ENCODE measurements at regions of chr11 and their contacts with region 1.

Region 1: GRCh38 chr11:119338318-119338907 is 2.3 kb downstream of the C1QTNF5 start:
- DNase-seq: peak; percentile 39
- ATAC-seq: peak; percentile 67
- H3K4me3 ChIP-seq: no peak overlapping the region
- H3K27ac ChIP-seq: no peak overlapping the region
- H3K4me1 ChIP-seq: peaks cover 9 to 51% of the 10 kb centered on the region in 2 experiments
- H3K27me3 ChIP-seq: no peaks in the 10 kb centered on the region
- CTCF ChIP-seq: peak; percentile 85 to 88 (median 86)
- POLR2A ChIP-seq: no peak
- RAD21 ChIP-seq: peak; percentile 74

Region 2: GRCh38 chr11:119316729-119317591 is 21.5 kb before region 1 on chr11 and contains the start of gene MCAM:
- CTCF ChIA-PET with region 1: interaction called, 44 read pairs
- POLR2A ChIA-PET with region 1: interaction called, 3 read pairs
- RAD21 ChIA-PET with region 1: interaction called, 4 read pairs
- intact Hi-C with region 1: no loop called
- DNase-seq: no peak
- ATAC-seq: peak; percentile 52
- H3K4me3 ChIP-seq: peak within 1 kb of the TSS; percentile 63 to 75
- H3K27ac ChIP-seq: peak within 1 kb of the TSS; percentile 66
- H3K4me1 ChIP-seq: peaks cover 16 to 45% of the 10 kb centered on the region in 2 experiments
- H3K27me3 ChIP-seq: no peaks in the 10 kb centered on the region
- CTCF ChIP-seq: no peak
- POLR2A ChIP-seq: no peak
- RAD21 ChIP-seq: no peak
- total RNA-seq, gene MCAM: 17.4 TPM

Region 3: GRCh38 chr11:119356349-119357031 is 18.1 kb after region 1 on chr11:
- CTCF ChIA-PET with region 1: interaction called, 68 read pairs
- POLR2A ChIA-PET with region 1: interaction called, 7 read pairs
- RAD21 ChIA-PET with region 1: interaction called in 1 of 2 experiments, 3 read pairs
- intact Hi-C with region 1: no loop called
- DNase-seq: peak; percentile 60
- ATAC-seq: peak; percentile 87
- H3K4me3 ChIP-seq: peak overlapping the region; percentile 62 to 66
- H3K27ac ChIP-seq: peak overlapping the region; percentile 68
- H3K4me1 ChIP-seq: peaks cover 17 to 30% of the 10 kb centered on the region in 2 experiments
- H3K27me3 ChIP-seq: no peaks in the 10 kb centered on the region
- CTCF ChIP-seq: peak; percentile 84 to 97 (median 89)
- POLR2A ChIP-seq: no peak
- RAD21 ChIP-seq: peak; percentile 94

Region 4: DNA sequence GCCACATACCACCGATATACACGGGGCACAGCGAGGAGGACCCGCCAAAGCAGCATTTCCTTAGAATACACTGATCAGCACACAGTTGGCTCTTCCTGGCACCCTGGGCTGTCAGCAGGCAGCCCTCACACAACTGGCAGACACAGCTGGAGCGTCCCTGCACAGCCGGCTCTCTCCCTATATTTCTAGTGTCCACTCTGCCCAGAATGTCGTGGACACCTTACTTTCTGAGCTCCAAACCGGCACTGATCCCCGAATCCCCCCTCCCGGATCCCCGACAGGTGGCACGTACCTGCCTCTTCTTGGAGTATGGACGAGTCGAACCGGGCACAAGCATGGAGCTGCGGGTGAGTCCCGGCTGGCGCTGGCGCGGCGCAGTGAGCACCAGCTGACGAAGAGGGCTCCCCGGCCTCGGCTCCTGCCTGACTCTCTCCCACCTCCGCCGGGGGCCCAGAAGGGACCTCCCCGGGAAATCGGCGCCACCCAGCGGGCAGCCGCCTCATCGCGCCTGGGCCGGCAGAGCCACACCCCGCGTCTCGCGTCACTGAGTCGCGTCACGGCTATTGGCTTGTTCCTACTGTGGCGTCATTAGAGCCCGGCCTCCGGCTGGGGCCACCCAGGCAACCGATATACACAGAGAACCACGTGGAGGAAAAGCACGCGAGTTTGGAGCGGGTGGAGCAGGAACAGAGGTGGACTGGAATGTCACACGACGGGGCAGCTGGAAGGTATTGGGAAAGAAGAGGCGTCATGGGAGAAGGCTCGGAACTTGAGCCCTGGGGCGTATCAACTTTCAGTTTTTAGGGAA is 43.0 kb after region 1 on chr11 and contains the start of gene USP2:
- CTCF ChIA-PET with region 1: interaction called, 11 read pairs
- POLR2A ChIA-PET with region 1: no interaction called
- RAD21 ChIA-PET with region 1: no interaction called
- intact Hi-C with region 1: no loop called
- DNase-seq: peak; percentile 93
- ATAC-seq: peak; percentile 96
- H3K4me3 ChIP-seq: peak within 1 kb of the TSS; percentile 63 to 65
- H3K27ac ChIP-seq: no peak within 1 kb of the TSS; the same call in 1 of the 2 replicates
- H3K4me1 ChIP-seq: peaks cover 6 to 33% of the 10 kb centered on the region in 2 experiments; a peak in 3 of 4 replicates
- H3K27me3 ChIP-seq: no peaks in the 10 kb centered on the region
- CTCF ChIP-seq: peak; percentile 83 to 86 (median 86)
- POLR2A ChIP-seq: no peak
- RAD21 ChIP-seq: peak; percentile 66
- total RNA-seq, gene USP2: 5.0 TPM

Region 5: GRCh38 chr11:120151536-120151935 is 813.1 kb after region 1 on chr11:
- CTCF ChIA-PET with region 1: no interaction called
- POLR2A ChIA-PET with region 1: no interaction called
- RAD21 ChIA-PET with region 1: no interaction called
- intact Hi-C with region 1: no loop called
- DNase-seq: no peak
- ATAC-seq: no peak
- H3K4me3 ChIP-seq: no peak overlapping the region
- H3K27ac ChIP-seq: no peak overlapping the region
- H3K4me1 ChIP-seq: no peaks in the 10 kb centered on the region
- H3K27me3 ChIP-seq: 0 out of 2 replicates have a peak, but pooled peaks cover 3% of the 10 kb centered on the region
- CTCF ChIP-seq: no peak
- POLR2A ChIP-seq: no peak
- RAD21 ChIP-seq: no peak